ENCODE measurements at regions of chr16 and their contacts with region 1.

Region 1: GRCh38 chr16:1964506-1965395 is at the start of gene RPS2:
- DNase-seq: peak; percentile 94 to 97
- H3K4me3 ChIP-seq: peak within 1 kb of the TSS; percentile 98 to 99 (median 98)
- H3K27ac ChIP-seq: peak within 1 kb of the TSS; percentile 94
- H3K4me1 ChIP-seq: peaks cover 0 to 22% (median 5%) of the 10 kb centered on the region in 4 experiments; a peak in 5 of 7 replicates
- H3K27me3 ChIP-seq: no peaks in the 10 kb centered on the region
- CTCF ChIP-seq: no peak
- EP300 ChIP-seq: no peak
- POLR2A ChIP-seq: peak; percentile 99 to 100
- RAD21 ChIP-seq: no peak
- total RNA-seq, gene RPS2: 3,974 and 4,042 TPM in 2 replicates

Region 2: DNA sequence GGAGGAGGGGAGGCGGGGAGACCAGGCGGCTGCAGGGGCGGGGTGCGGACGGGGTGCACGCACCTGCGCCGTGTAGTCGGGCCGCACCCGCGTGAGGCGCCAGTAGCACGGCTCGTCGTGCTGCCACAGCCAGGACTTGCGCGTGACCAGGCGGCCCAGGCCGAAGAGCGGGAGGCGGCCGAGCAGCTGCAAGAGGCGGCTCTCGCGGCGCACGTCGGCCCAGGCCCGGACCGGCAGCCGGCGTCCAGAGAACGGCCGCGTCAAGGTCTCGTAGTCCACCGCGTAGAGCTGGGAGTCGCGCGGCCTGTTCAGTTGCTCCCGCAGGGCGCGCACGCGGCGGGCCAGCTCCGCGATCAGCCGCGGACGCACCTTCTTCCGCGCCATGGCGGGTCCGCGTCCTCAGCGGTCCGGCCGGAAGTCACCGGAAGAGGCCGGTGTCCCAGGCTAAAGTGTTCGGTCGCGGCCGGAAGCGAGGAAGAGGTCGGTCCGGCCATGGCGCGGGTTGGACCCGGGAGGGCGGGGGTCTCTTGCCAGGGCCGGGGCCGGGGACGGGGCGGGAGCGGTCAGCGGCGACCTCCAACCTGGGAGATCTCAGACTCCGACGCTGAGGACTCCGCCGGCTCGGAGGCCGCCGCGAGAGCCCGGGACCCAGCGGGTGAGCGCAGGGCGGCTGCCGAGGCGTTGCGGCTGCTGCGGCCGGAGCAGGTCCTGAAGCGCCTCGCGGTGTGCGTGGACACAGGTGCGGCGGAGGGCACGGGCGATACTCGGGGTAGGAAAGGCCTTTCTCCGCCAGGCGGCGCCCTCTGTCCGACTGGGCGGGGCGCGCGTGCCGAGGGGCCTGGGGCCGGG is 191.8 kb before region 1 on chr16 and contains the starts of genes EME2 and MRPS34:
- CTCF ChIA-PET with region 1: no interaction called
- POLR2A ChIA-PET with region 1: interaction called, 33 read pairs
- DNase-seq: peak; percentile 51 to 95
- H3K4me3 ChIP-seq: peak within 1 kb of the TSS; percentile 82 to 91 (median 82)
- H3K27ac ChIP-seq: peak within 1 kb of the TSS; percentile 62
- H3K4me1 ChIP-seq: peaks cover 0 to 12% (median 10%) of the 10 kb centered on the region in 4 experiments; a peak in 5 of 7 replicates
- H3K27me3 ChIP-seq: no peaks in the 10 kb centered on the region
- CTCF ChIP-seq: peak in 2 of 3 experiments; percentile 70 to 80; a peak in 3 of 4 replicates
- EP300 ChIP-seq: no peak
- POLR2A ChIP-seq: peak in 1 of 2 experiments; percentile 44; a peak in 1 of 3 replicates
- RAD21 ChIP-seq: peak; percentile 27 to 50; a peak in 3 of 4 replicates
- total RNA-seq, gene EME2: 19.3 and 19.7 TPM in 2 replicates
- total RNA-seq, gene MRPS34: 252 and 267 TPM in 2 replicates

Region 3: DNA sequence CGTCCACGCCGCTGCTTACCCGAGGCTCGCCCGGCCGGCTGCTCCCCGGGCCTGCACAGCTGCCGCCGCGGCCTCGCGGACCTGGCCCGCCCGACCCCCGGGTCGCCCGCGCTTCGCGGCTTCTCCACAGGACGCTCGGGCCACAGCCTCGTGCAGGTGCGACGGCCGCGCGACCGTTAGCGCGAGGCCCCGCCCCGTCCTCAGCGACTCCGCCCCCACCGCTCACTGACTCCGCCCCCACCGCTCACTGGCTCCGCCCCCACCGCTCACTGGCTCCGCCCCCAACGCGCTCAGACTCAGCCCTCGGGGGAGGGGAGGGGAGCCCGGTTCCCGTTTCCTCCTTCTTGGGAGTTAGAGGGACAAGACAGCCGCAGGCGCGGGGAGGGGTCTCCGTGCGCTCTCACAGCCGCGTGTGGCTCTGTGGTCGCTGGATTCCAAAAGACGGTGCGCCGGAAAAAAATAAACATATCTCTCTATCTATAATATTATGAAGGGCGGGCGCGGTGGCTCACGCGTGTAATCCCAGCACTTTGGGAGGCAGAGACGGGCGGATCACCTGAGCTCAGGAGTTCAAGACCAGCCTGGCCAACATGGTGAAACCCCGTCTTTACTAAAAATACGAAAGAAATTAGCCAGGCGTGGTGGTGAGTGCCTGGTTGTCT is 92.6 kb before region 1 on chr16 and contains the start of gene MEIOB:
- CTCF ChIA-PET with region 1: interaction called, 6 read pairs
- POLR2A ChIA-PET with region 1: interaction called, 12 read pairs
- DNase-seq: peak; percentile 41 to 96
- H3K4me3 ChIP-seq: peak within 1 kb of the TSS; percentile 31 to 62 (median 32); a peak in 7 of 8 replicates
- H3K27ac ChIP-seq: no peak within 1 kb of the TSS
- H3K4me1 ChIP-seq: peaks cover 0 to 4% (median 0%) of the 10 kb centered on the region in 4 experiments; a peak in 1 of 7 replicates
- H3K27me3 ChIP-seq: peaks cover 0 to 15% (median 6%) of the 10 kb centered on the region in 4 experiments; a peak in 6 of 7 replicates
- CTCF ChIP-seq: no peak
- EP300 ChIP-seq: no peak
- POLR2A ChIP-seq: no peak
- RAD21 ChIP-seq: no peak
- total RNA-seq, gene MEIOB: 0.99 and 1.1 TPM in 2 replicates

Region 4: DNA sequence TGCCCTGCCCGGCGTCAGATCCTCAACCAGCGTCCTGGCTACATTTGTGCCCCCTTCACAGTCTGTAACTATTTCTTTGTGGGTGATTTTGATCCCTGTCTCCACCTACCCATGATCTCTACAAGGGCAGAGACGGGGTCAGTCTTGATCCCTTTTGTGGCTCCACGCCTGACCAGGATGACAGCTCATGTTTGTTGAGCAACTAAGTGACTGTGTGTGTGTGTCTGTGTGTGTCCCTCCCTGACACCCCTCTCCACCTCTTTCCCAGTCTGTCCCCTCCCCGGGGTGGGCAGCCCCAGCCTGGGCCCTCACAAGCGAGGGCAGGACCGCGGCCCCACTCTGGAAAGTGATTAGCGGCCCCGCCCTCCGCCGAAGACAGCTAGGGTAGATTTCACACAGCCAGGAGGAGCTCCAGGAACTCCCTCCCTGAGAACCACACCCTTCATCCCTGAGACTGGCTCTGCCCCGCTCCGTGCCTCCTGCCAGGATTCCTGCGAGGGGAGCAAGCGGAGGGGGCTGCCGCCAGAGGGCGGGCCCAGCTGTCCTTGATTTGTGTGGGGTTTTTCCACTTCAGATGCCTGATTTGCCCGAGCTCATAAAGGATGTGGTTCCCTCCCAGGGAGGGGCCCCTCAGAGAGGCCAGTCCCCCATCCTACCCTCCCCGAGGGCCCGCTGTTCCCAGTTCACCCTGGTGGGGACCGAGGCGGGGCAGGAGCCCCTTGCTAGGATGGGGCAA is 41.3 kb before region 1 on chr16:
- CTCF ChIA-PET with region 1: interaction called, 9 read pairs
- POLR2A ChIA-PET with region 1: interaction called, 27 read pairs
- DNase-seq: peak; percentile 49 to 86
- H3K4me3 ChIP-seq: peak overlapping the region in 1 of 4 experiments; percentile 47; a peak in 4 of 8 replicates
- H3K27ac ChIP-seq: no peak overlapping the region
- H3K4me1 ChIP-seq: peaks cover 4 to 23% (median 15%) of the 10 kb centered on the region in 4 experiments
- H3K27me3 ChIP-seq: peaks cover 23 to 62% (median 45%) of the 10 kb centered on the region in 4 experiments
- CTCF ChIP-seq: peak; percentile 56 to 66 (median 59)
- EP300 ChIP-seq: no peak
- POLR2A ChIP-seq: no peak
- RAD21 ChIP-seq: peak; percentile 28 to 45; a peak in 2 of 4 replicates

Region 5: GRCh38 chr16:1942810-1943726 is 21.7 kb before region 1 on chr16 and contains the start of gene MSRB1:
- CTCF ChIA-PET with region 1: interaction called, 6 read pairs
- POLR2A ChIA-PET with region 1: interaction called, 336 read pairs
- DNase-seq: peak; percentile 96 to 100
- H3K4me3 ChIP-seq: peak within 1 kb of the TSS; percentile 55 to 87 (median 66)
- H3K27ac ChIP-seq: no peak within 1 kb of the TSS
- H3K4me1 ChIP-seq: peaks cover 0 to 11% (median 6%) of the 10 kb centered on the region in 4 experiments; a peak in 5 of 7 replicates
- H3K27me3 ChIP-seq: peaks cover 0 to 2% (median 0%) of the 10 kb centered on the region in 4 experiments; a peak in 1 of 7 replicates
- CTCF ChIP-seq: no peak; a peak in 1 of 4 replicates
- EP300 ChIP-seq: no peak
- POLR2A ChIP-seq: peak in 1 of 2 experiments; percentile 80; a peak in 2 of 3 replicates
- RAD21 ChIP-seq: no peak
- total RNA-seq, gene MSRB1: 28.2 and 34.1 TPM in 2 replicates

Region 6: GRCh38 chr16:1983544-1984346 is 19.0 kb after region 1 on chr16 and contains the start of gene GFER:
- CTCF ChIA-PET with region 1: interaction called, 3 read pairs
- POLR2A ChIA-PET with region 1: interaction called, 736 read pairs
- DNase-seq: peak; percentile 81 to 95
- H3K4me3 ChIP-seq: peak within 1 kb of the TSS; percentile 52 to 96 (median 73)
- H3K27ac ChIP-seq: peak within 1 kb of the TSS; percentile 43; the same call in 1 of the 2 replicates
- H3K4me1 ChIP-seq: peaks cover 3 to 41% (median 26%) of the 10 kb centered on the region in 4 experiments
- H3K27me3 ChIP-seq: peaks cover 8 to 45% (median 43%) of the 10 kb centered on the region in 4 experiments; a peak in 6 of 7 replicates
- CTCF ChIP-seq: peak in 2 of 3 experiments; percentile 58 to 60; a peak in 3 of 4 replicates
- EP300 ChIP-seq: 0 out of 3 replicates have a peak, but pooled peaks of 1 of the 2 experiments have one; percentile 48
- POLR2A ChIP-seq: peak in 1 of 2 experiments; percentile 93; a peak in 2 of 3 replicates
- RAD21 ChIP-seq: no peak; a peak in 1 of 4 replicates
- total RNA-seq, gene GFER: 37.9 and 45.4 TPM in 2 replicates

Region 7: DNA sequence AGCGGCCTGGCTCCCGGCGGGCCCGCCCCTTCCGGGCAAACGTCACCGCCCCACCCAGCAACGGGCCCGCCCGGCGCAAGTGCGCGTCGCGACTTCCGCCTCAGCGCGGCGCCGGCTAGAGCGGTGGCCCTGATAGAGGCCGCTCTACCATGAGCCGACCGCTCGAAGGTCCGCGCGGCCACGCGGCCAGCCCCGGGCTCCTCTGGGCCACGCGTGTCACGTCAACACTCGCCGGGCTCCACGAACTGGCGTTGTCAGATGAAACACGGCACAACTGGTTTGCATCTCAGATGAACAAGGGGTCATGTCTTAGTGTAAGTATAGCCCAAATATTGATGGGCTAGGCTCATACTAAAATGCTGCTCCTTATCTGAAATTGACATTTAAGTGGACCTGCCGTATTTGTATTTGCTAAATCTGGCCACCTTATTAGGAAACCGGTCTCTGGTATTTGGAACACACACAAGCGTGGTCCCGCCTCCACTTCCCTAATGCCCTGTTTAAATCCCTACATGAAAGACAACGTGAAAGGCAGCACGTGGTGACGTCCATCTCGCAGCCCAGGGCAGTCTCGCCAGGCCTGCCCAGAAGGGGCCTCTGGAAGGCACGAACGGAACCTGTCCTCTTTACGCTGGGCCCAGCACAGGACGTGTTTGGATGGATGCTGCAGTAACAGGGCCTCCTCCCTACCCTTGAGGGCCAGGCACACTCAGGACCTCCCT is 45.2 kb after region 1 on chr16 and contains the start of gene ZNF598:
- CTCF ChIA-PET with region 1: no interaction called
- POLR2A ChIA-PET with region 1: interaction called, 37 read pairs
- DNase-seq: peak in 1 of 2 experiments; percentile 82
- H3K4me3 ChIP-seq: peak within 1 kb of the TSS; percentile 66 to 95 (median 83)
- H3K27ac ChIP-seq: peak within 1 kb of the TSS; percentile 61
- H3K4me1 ChIP-seq: peaks cover 3 to 26% (median 15%) of the 10 kb centered on the region in 4 experiments
- H3K27me3 ChIP-seq: no peaks in the 10 kb centered on the region
- CTCF ChIP-seq: no peak
- EP300 ChIP-seq: no peak
- POLR2A ChIP-seq: peak in 1 of 2 experiments; percentile 80; a peak in 2 of 3 replicates
- RAD21 ChIP-seq: no peak
- total RNA-seq, gene ZNF598: 47.6 and 51.7 TPM in 2 replicates